ENCODE measurements at regions of chr17 and their contacts with region 1.

Region 1: DNA sequence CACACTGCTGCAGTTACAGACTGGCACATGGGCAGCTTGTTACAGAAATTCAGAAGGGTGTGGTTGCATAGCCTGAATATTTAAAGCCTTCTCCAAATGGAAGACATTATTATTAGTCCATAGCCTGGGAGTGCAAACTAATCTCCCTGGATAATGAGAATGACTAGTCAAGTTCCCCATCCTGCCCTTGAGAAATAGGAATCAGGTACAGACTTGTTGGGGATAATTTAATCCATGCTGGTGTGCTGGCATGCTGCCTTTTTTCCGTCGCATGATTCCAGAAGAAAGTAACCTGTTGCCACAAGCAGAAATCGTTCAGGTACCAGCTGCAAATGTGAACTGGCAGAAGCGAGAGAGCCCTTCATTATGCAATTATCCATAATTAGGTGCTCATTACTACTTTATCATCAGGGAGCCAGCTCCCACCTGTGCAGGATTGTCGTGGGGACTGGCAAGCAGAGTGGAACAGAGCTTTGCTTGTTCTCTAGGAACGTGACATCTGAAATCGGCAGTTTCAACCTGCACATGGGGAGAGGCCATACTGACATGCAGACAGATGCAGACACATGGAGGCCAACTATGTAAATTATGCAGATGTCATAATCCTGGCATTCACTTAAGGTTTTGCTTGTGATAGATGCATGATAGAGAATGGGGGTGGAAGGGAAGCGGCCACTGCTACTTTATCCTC is 419.4 kb downstream of the PMP22 start:
- DNase-seq: peak; percentile 95
- H3K4me3 Mint-ChIP-seq: peak overlapping the region; percentile 46
- H3K27ac Mint-ChIP-seq: peak overlapping the region; percentile 37
- H3K4me1 Mint-ChIP-seq: peaks cover 25% of the 10 kb centered on the region
- H3K27me3 Mint-ChIP-seq: no peaks in the 10 kb centered on the region
- CTCF ChIP-seq: no peak

Region 2: DNA sequence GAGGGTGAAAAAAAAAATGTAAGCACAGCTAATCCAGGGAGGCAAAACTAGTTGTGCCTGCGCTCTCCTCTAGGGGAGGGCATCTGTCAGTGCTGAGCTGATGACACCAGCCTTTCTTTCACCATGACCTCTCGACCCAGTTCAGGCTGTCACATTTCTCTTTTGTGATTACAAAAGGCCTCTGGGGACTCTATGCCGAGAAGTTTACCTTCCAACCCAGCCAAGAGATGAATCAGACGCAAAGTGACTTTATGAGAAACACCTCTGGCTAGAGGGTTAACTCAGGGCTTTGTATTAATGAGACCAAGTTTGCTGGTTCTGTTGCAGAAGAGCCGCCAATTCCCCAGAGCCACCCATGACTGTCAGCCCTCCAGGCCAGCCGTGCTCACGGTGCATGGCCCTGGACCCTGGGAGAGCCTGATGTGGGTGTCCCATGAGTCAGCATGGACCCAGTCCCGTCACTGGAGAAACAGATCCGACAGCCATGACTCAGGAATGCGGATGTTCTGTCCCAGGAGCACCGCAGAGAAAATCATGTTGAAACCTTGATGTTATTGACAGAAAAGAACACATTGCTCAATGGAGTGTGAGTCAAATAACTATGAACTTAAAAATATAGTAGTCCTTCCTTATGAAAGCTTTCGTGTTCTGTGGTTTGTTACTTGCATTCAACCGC is 107.6 kb before region 1 on chr17:
- CTCF ChIA-PET with region 1: no interaction called
- POLR2A ChIA-PET with region 1: interaction called, 24 read pairs
- intact Hi-C with region 1: no loop called
- DNase-seq: peak; percentile 100
- H3K4me3 Mint-ChIP-seq: peak overlapping the region; percentile 54
- H3K27ac Mint-ChIP-seq: peak overlapping the region; percentile 85
- H3K4me1 Mint-ChIP-seq: peaks cover 30% of the 10 kb centered on the region
- H3K27me3 Mint-ChIP-seq: no peaks in the 10 kb centered on the region
- CTCF ChIP-seq: peak; percentile 36

Region 3: GRCh38 chr17:14813649-14814365 is 31.9 kb before region 1 on chr17:
- CTCF ChIA-PET with region 1: no interaction called
- POLR2A ChIA-PET with region 1: no interaction called
- intact Hi-C with region 1: no loop called
- DNase-seq: no peak
- H3K4me3 Mint-ChIP-seq: no peak overlapping the region
- H3K27ac Mint-ChIP-seq: no peak overlapping the region
- H3K4me1 Mint-ChIP-seq: peaks cover 7% of the 10 kb centered on the region
- H3K27me3 Mint-ChIP-seq: no peaks in the 10 kb centered on the region
- CTCF ChIP-seq: no peak

Region 4: DNA sequence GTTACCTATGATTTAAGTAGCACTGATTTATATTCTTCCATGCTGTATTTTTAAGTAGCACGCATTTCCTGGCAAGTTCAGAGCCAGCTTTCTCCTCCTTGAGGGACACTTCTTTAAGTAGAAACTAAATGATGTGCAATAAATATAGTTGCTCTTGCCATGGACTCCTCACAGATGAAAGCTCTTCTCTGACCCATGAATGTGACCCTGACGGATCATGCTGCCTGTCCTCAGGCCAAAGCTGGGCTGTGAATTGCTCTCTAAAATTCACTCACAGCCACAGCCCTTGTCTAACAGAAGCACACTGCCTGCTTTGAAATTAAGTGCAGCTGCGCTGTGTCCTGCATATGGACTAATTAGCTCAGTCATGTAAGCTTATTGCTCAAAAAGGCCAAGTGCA is 19.4 kb before region 1 on chr17:
- CTCF ChIA-PET with region 1: no interaction called
- POLR2A ChIA-PET with region 1: interaction called, 10 read pairs
- intact Hi-C with region 1: no loop called
- DNase-seq: no peak
- H3K4me3 Mint-ChIP-seq: no peak overlapping the region
- H3K27ac Mint-ChIP-seq: no peak overlapping the region
- H3K4me1 Mint-ChIP-seq: no peaks in the 10 kb centered on the region
- H3K27me3 Mint-ChIP-seq: no peaks in the 10 kb centered on the region
- CTCF ChIP-seq: no peak

Region 5: GRCh38 chr17:14859542-14859941 is 13.8 kb after region 1 on chr17:
- CTCF ChIA-PET with region 1: no interaction called
- POLR2A ChIA-PET with region 1: interaction called, 10 read pairs
- intact Hi-C with region 1: no loop called
- DNase-seq: no peak
- H3K4me3 Mint-ChIP-seq: no peak overlapping the region
- H3K27ac Mint-ChIP-seq: no peak overlapping the region
- H3K4me1 Mint-ChIP-seq: no peaks in the 10 kb centered on the region
- H3K27me3 Mint-ChIP-seq: no peaks in the 10 kb centered on the region
- CTCF ChIP-seq: no peak

Region 6: GRCh38 chr17:15091825-15092224 is 246.1 kb after region 1 on chr17:
- CTCF ChIA-PET with region 1: no interaction called
- POLR2A ChIA-PET with region 1: no interaction called
- intact Hi-C with region 1: no loop called
- DNase-seq: peak; percentile 53
- H3K4me3 Mint-ChIP-seq: no peak overlapping the region
- H3K27ac Mint-ChIP-seq: no peak overlapping the region
- H3K4me1 Mint-ChIP-seq: no peaks in the 10 kb centered on the region
- H3K27me3 Mint-ChIP-seq: peaks cover 26% of the 10 kb centered on the region
- CTCF ChIP-seq: peak; percentile 38